Panc1 (cell line): ENCODE measurements at regions of chr15 and their contacts with region 1.

Region 1: DNA sequence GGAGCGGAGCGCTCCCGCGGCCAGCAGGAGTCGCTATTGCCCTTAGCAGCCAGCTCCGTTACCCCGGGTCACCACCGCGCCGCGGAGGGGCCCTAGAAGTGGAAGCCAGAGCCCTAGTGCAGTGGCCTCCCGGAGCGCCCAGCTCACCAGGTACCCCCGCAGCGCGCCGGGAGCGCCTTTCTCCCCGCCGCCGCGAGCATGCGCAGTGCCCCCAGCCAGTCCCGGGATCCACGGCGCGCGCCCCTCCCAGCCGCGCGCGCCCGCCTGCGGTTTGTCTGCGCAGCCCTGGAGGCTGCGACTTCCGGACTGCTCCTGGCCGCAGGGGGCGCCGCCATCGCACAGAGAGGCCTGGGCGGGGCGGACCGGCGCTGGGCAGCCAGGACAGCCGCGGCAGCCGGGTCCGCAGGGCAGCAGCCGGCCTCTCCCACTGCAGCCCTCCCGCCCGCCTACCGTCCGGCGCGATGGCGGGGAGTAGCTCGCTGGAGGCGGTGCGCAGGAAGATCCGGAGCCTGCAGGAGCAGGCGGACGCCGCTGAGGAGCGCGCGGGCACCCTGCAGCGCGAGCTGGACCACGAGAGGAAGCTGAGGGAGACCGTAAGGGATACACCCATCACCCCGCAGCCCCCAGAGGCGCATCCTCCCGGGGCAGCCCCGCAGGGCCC is 5.7 kb downstream of the TPM1 start:
- DNase-seq: peak; percentile 87
- ATAC-seq: peak; percentile 84
- H3K4me3 ChIP-seq: peak overlapping the region; percentile 80 to 90
- H3K27ac ChIP-seq: peak overlapping the region; percentile 85
- H3K4me1 ChIP-seq: peaks cover 77% of the 10 kb centered on the region
- H3K27me3 ChIP-seq: no peaks in the 10 kb centered on the region
- CTCF ChIP-seq: peak; percentile 98

Region 2: GRCh38 chr15:62782039-62782791 is 266.0 kb before region 1 on chr15:
- CTCF ChIA-PET with region 1: interaction called, 11 read pairs
- POLR2A ChIA-PET with region 1: interaction called, 10 read pairs
- in situ Hi-C with region 1: no loop called
- intact Hi-C with region 1: loop called (anchors 2 kb)
- DNase-seq: peak; percentile 69
- ATAC-seq: peak; percentile 95
- H3K4me3 ChIP-seq: no peak overlapping the region
- H3K27ac ChIP-seq: peak overlapping the region; percentile 64
- H3K4me1 ChIP-seq: peaks cover 24% of the 10 kb centered on the region
- H3K27me3 ChIP-seq: no peaks in the 10 kb centered on the region
- CTCF ChIP-seq: peak; percentile 86

Region 3: DNA sequence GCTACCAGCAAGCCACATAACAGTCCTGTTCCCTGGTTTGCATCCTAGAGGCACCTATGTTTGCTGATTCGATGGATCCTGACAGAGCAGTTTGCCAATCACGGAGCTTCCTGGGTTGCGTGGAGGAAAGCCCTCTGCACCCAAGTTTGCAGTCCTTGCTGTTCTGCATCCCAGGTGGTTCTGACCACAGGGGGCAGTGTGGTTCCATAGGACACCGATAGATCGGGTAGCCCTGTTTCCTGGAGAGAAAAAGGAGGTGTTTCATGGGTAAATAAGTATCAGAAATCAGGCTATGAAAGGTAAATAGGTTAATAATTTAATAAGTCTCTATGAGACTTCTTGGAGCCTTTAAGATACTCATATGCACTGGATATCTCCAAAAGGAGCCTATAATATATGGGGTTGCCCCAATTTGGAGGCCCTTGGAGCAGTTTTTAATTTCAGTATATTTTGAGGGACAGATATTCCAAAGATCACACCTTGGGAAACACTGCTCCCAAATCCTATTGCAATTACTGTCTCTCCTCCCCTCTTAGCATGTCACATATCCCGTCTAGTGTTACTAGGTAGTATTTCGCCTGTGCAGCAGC is 200.2 kb before region 1 on chr15:
- CTCF ChIA-PET with region 1: interaction called, 10 read pairs
- POLR2A ChIA-PET with region 1: interaction called, 6 read pairs
- in situ Hi-C with region 1: no loop called
- intact Hi-C with region 1: loop called (anchors 5 kb)
- DNase-seq: peak; percentile 52
- ATAC-seq: peak; percentile 74
- H3K4me3 ChIP-seq: no peak overlapping the region
- H3K27ac ChIP-seq: peak overlapping the region; percentile 48; the same call in 1 of the 2 replicates
- H3K4me1 ChIP-seq: peaks cover 39% of the 10 kb centered on the region
- H3K27me3 ChIP-seq: no peaks in the 10 kb centered on the region
- CTCF ChIP-seq: peak; percentile 85

Region 4: DNA sequence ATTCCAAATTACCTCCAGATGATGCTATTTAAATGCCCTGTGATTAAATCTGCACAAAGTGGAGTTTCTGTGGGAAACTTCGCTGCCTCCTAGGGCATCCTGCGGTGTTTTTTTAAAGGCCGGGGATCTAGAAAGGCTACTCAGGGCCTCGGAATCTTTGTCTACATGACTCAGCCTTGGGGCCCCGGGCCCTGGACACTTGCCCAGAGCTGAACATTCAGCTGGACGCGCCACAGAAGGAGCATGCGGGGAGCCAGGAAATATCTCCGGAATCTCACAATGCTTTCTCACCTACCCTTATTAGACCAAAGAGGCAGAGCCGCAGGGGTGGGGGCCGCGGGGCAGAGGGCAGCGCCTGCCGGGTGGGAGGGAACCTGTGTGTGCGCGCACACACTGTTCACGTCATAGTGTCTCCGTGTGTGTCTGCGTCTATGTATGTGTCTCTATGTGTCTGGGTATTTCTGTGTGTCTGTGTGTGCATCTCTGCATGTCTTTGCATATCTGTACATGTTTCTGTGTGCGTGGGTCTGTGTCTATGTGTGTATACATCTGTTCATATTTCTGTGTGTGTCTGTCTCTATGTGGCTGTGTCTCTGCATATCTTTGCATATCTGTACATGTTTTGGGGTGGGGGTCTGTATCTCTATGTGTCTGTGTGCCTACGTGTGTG is 151.1 kb before region 1 on chr15:
- CTCF ChIA-PET with region 1: interaction called, 8 read pairs
- POLR2A ChIA-PET with region 1: no interaction called
- in situ Hi-C with region 1: no loop called
- intact Hi-C with region 1: loop called (anchors 5 kb)
- DNase-seq: peak; percentile 98
- ATAC-seq: peak; percentile 93
- H3K4me3 ChIP-seq: peak overlapping the region; percentile 2 to 23; a peak in 3 of 4 replicates
- H3K27ac ChIP-seq: peak overlapping the region; percentile 99
- H3K4me1 ChIP-seq: peaks cover 55% of the 10 kb centered on the region
- H3K27me3 ChIP-seq: no peaks in the 10 kb centered on the region
- CTCF ChIP-seq: no peak

Region 5: GRCh38 chr15:62995047-62995674 is 53.1 kb before region 1 on chr15:
- CTCF ChIA-PET with region 1: no interaction called
- POLR2A ChIA-PET with region 1: no interaction called
- in situ Hi-C with region 1: no loop called
- intact Hi-C with region 1: no loop called
- DNase-seq: no peak
- ATAC-seq: peak; percentile 72
- H3K4me3 ChIP-seq: no peak overlapping the region
- H3K27ac ChIP-seq: no peak overlapping the region
- H3K4me1 ChIP-seq: no peaks in the 10 kb centered on the region; the same call in 1 of the 2 replicates
- H3K27me3 ChIP-seq: no peaks in the 10 kb centered on the region
- CTCF ChIP-seq: no peak

Region 6: DNA sequence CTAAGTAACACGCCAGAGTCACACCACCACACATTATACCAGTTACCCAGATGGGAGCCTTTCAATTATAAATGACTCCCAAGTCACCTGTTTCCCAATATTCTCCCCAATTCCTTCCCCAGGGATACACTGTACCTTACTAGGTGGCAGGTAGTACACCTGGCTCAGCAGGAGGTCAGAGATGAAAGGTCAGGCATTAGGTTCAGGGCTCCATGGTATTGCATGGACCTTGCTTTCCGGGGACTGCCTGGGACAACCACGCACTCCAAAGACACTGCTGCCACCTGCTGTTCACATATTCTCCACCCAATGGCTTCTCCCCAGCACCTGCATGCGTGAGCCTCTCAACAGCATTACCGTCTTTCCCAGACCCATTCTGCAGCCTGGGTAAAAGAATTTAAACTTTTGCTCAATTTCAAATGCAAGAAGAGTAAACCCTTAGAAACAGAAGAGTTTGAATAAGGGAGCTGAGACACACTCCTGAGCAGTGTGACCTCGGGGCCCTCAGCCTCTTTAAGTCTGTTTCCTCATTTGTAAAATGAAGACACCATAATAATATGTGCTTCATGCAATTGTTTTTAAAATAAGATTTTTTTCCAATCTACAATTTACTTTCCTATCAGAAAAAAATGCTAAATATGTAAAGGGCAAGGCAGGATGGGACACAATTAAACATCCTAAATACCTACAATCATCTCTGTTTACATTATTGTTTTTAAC is 45.4 kb after region 1 on chr15:
- CTCF ChIA-PET with region 1: interaction called, 6 read pairs
- POLR2A ChIA-PET with region 1: interaction called, 4 read pairs
- in situ Hi-C with region 1: no loop called
- intact Hi-C with region 1: loop called (anchors 2 kb)
- DNase-seq: peak; percentile 72
- ATAC-seq: peak; percentile 97
- H3K4me3 ChIP-seq: no peak overlapping the region
- H3K27ac ChIP-seq: no peak overlapping the region
- H3K4me1 ChIP-seq: peaks cover 7% of the 10 kb centered on the region; the same call in 1 of the 2 replicates
- H3K27me3 ChIP-seq: no peaks in the 10 kb centered on the region
- CTCF ChIP-seq: peak; percentile 91

Region 7: GRCh38 chr15:63157118-63157843 is 109.0 kb after region 1 on chr15 and contains the start of gene RPS27L:
- CTCF ChIA-PET with region 1: interaction called, 3 read pairs
- POLR2A ChIA-PET with region 1: no interaction called
- in situ Hi-C with region 1: no loop called
- intact Hi-C with region 1: loop called (anchors 10 kb)
- DNase-seq: no peak
- ATAC-seq: peak; percentile 99
- H3K4me3 ChIP-seq: peak within 1 kb of the TSS; percentile 81 to 86
- H3K27ac ChIP-seq: peak within 1 kb of the TSS; percentile 90
- H3K4me1 ChIP-seq: peaks cover 9% of the 10 kb centered on the region; the same call in 1 of the 2 replicates
- H3K27me3 ChIP-seq: no peaks in the 10 kb centered on the region
- CTCF ChIP-seq: no peak
- total RNA-seq, gene RPS27L: 61.3 TPM

Region 8: GRCh38 chr15:63402498-63403253 is 354.4 kb after region 1 on chr15:
- CTCF ChIA-PET with region 1: interaction called, 11 read pairs
- POLR2A ChIA-PET with region 1: no interaction called
- in situ Hi-C with region 1: no loop called
- intact Hi-C with region 1: no loop called
- DNase-seq: peak; percentile 25
- ATAC-seq: peak; percentile 83
- H3K4me3 ChIP-seq: no peak overlapping the region
- H3K27ac ChIP-seq: no peak overlapping the region
- H3K4me1 ChIP-seq: no peaks in the 10 kb centered on the region
- H3K27me3 ChIP-seq: no peaks in the 10 kb centered on the region
- CTCF ChIP-seq: peak; percentile 74

Region 9: GRCh38 chr15:63735449-63735848 is 687.2 kb after region 1 on chr15:
- CTCF ChIA-PET with region 1: no interaction called
- POLR2A ChIA-PET with region 1: no interaction called
- in situ Hi-C with region 1: no loop called
- intact Hi-C with region 1: no loop called
- DNase-seq: no peak
- ATAC-seq: no peak
- H3K4me3 ChIP-seq: no peak overlapping the region
- H3K27ac ChIP-seq: no peak overlapping the region
- H3K4me1 ChIP-seq: no peaks in the 10 kb centered on the region
- H3K27me3 ChIP-seq: no peaks in the 10 kb centered on the region
- CTCF ChIP-seq: no peak